A549 (cell line): ENCODE measurements at regions of chr1 and their contacts with region 1.

Region 1: GRCh38 chr1:28581536-28582247 is 10.4 kb upstream of the RAB42 start:
- DNase-seq: peak; percentile 88 to 94
- ATAC-seq: peak; percentile 90 to 93
- H3K4me3 ChIP-seq: peak overlapping the region; percentile 99
- H3K27ac ChIP-seq: peak overlapping the region; percentile 96 to 98
- H3K4me1 ChIP-seq: peaks cover 21% of the 10 kb centered on the region; the same call in 2 of the 3 replicates
- CTCF ChIP-seq: no peak
- EP300 ChIP-seq: no peak
- POLR2A ChIP-seq: peak; percentile 99
- RAD21 ChIP-seq: no peak

Region 2: GRCh38 chr1:28369371-28370238 is 212.1 kb before region 1 on chr1 and contains the start of gene PHACTR4:
- CTCF ChIA-PET with region 1: no interaction called
- POLR2A ChIA-PET with region 1: interaction called, 10 read pairs
- DNase-seq: peak; percentile 87 to 95
- ATAC-seq: peak; percentile 94 to 98
- H3K4me3 ChIP-seq: peak within 1 kb of the TSS; percentile 72
- H3K27ac ChIP-seq: peak within 1 kb of the TSS; percentile 96
- H3K4me1 ChIP-seq: peaks cover 39% of the 10 kb centered on the region
- CTCF ChIP-seq: no peak
- EP300 ChIP-seq: no peak
- POLR2A ChIP-seq: peak; percentile 74
- RAD21 ChIP-seq: no peak
- polyA plus RNA-seq, gene PHACTR4: 17.4 and 32.1 TPM in 2 replicates

Region 3: GRCh38 chr1:28518000-28518744 is 63.5 kb before region 1 on chr1:
- CTCF ChIA-PET with region 1: interaction called, 4 read pairs
- POLR2A ChIA-PET with region 1: interaction called, 19 read pairs
- DNase-seq: peak; percentile 73 to 86
- ATAC-seq: peak; percentile 56 to 61
- H3K4me3 ChIP-seq: peak overlapping the region; percentile 79
- H3K27ac ChIP-seq: peak overlapping the region; percentile 95 to 97
- H3K4me1 ChIP-seq: peaks cover 40% of the 10 kb centered on the region
- CTCF ChIP-seq: peak; percentile 76
- EP300 ChIP-seq: no peak
- POLR2A ChIP-seq: peak; percentile 62
- RAD21 ChIP-seq: peak; percentile 63 to 74

Region 4: DNA sequence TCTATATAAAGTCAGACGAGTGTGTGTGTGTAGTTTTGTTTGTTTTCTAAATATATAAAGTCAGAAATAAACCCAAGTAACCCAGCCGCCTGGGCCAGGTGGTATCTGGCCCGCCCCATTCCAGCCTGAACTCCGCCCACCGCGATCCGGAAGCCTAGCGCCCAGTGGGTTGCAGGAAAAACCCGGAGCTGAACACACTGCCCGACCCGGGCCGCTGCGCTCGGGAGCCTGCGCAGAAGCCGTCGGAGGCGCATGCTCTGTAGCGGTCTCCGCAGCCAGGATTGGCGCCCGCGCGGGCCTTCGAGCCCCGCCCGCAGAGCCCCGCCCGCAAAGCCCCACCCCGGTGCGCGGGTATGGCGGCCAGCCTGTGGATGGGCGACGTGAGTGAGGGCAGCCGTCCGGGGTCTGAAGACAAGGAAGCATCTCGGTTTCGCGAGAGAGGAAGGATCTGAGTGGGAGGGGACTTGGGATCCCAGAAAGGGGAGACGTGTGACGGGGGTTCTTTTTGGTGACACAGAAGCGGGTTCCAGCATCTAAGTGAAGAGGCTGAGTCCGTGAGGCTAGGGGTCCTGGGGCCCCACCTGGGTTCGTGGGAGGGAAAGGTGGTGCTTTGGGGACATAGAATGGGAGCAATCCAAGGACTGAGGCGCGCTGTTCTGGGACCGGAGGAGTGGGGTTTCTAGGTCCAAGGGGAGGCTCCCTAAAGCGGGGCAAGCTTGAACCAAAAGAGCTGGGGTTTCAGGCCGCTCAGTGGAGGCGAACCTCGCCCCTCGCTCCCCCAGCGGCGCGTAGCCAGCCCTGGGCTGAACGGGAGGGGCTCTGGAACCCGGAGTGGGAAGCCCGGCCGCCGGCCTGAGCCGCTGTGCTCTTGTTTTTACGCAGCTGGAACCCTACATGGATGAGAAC is 28.7 kb before region 1 on chr1 and contains the start of gene TRNAU1AP:
- CTCF ChIA-PET with region 1: interaction called, 6 read pairs
- POLR2A ChIA-PET with region 1: interaction called, 34 read pairs
- DNase-seq: peak; percentile 67 to 92
- ATAC-seq: peak; percentile 95 to 97
- H3K4me3 ChIP-seq: peak within 1 kb of the TSS; percentile 82
- H3K27ac ChIP-seq: peak within 1 kb of the TSS; percentile 90 to 91
- H3K4me1 ChIP-seq: 0 out of 3 replicates have a peak, but pooled peaks cover 6% of the 10 kb centered on the region
- CTCF ChIP-seq: no peak
- EP300 ChIP-seq: no peak
- POLR2A ChIP-seq: peak; percentile 59
- RAD21 ChIP-seq: no peak
- polyA plus RNA-seq, gene TRNAU1AP: 23.8 and 25.5 TPM in 2 replicates

Region 5: DNA sequence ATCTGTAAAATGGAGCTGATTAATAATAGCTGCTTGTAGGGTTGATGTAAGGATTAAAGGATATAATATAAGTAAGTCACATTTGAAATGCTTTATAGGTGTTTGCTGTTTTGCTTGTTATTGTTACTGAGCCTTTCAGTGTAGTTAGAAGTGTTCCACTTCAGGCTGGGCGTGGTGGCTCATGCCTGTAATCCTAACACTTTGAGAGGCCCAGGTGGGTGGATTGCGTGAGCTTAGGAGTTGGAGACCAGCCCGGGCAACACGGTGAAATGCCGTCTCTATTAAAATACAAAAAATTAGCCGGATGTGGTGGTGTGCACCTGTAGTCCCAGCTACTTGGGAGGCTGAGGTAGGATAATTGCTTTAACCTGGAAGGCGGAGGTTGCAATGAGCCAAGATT is 16.7 kb before region 1 on chr1:
- CTCF ChIA-PET with region 1: no interaction called
- POLR2A ChIA-PET with region 1: interaction called, 12 read pairs
- DNase-seq: no peak
- ATAC-seq: no peak
- H3K4me3 ChIP-seq: no peak overlapping the region
- H3K27ac ChIP-seq: no peak overlapping the region
- H3K4me1 ChIP-seq: no peaks in the 10 kb centered on the region
- CTCF ChIP-seq: no peak
- EP300 ChIP-seq: no peak
- POLR2A ChIP-seq: no peak
- RAD21 ChIP-seq: no peak

Region 6: DNA sequence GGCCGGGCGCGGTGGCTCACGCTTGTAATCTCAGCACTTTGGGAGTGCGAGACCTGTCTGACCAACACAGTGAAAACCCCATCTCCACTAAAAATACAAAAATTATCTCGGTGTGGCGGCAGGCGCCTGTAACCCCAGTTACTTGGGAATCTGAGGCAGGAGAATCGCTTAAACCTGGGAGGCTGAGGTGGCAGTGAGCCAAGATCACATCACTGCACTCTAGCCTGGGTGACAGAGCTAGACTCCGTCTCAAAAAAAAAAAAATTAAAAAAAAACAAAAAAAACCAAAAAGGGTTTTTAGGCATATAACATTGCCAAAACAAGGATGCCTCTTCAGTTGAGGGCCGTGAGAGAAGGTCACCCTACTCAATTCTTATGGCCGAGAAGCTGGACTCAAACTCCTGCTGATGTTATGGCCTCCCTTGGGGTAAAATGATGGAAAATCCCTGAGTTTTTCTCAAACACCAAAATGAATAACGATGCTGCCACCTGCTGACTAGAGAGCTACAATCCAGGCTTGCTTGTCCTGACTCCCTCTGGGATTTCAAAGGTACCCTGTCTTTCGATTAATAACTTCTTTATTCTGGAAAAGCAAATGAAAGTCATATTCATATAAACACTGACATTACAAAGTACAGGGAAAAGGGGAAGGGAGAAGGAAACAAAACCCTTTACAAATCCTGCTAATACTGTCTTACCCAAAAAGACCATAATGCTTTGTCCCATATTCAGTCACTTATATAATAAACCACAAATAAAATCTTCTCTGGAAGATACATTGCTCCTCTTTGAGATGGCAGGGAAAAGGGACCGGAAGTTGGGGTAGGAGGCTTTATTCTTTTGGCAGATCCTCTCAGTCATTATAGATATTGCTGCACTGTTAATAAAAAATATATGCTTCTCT is 21.1 kb after region 1 on chr1:
- CTCF ChIA-PET with region 1: interaction called, 25 read pairs
- POLR2A ChIA-PET with region 1: interaction called, 28 read pairs
- DNase-seq: peak; percentile 61 to 70
- ATAC-seq: peak; percentile 85 to 88
- H3K4me3 ChIP-seq: no peak overlapping the region
- H3K27ac ChIP-seq: peak overlapping the region; percentile 9 to 78; a peak in 4 of 6 replicates
- H3K4me1 ChIP-seq: peaks cover 16% of the 10 kb centered on the region
- CTCF ChIP-seq: peak; percentile 76
- EP300 ChIP-seq: no peak
- POLR2A ChIP-seq: no peak
- RAD21 ChIP-seq: peak; percentile 81 to 82

Region 7: DNA sequence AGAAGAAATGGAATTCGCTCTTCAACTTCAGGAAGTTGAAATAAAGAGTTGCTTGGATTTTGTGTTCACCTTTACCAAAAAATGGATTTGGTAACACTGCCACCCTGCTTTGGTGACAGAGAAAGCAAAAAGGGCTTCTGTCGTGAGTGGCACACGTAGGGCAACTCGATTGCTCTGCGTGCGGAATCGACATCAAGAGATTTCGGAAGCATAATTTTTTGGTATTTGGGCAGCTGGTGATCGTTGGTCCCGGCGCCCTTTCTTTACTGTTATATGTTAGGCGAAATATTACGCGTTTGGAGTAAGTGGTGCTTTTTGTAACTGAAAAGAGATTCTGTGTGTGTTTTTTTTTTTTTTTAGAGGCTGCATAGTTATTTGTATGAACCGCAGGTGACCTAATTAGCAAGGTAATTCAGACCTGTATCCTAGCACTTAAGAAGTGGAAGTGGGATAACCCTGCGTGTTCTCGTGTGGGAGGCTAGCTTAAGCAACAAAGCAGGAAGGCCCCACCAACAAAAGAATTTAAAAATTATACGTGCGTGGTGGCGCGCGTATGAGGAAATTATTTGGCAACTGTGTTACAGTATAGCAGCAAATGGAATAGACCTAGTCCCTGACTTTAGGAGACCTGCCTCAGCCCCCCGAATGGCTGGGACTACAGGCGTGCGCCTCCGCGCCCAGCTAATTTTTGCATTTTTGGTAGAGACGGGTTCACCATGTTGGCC is 66.9 kb after region 1 on chr1 and contains the start of gene RNU11:
- CTCF ChIA-PET with region 1: no interaction called
- POLR2A ChIA-PET with region 1: interaction called, 12 read pairs
- DNase-seq: peak; percentile 77 to 97
- ATAC-seq: peak; percentile 88 to 93
- H3K4me3 ChIP-seq: peak within 1 kb of the TSS; percentile 40
- H3K27ac ChIP-seq: peak within 1 kb of the TSS; percentile 96 to 97
- H3K4me1 ChIP-seq: peaks cover 15% of the 10 kb centered on the region; the same call in 2 of the 3 replicates
- CTCF ChIP-seq: no peak
- EP300 ChIP-seq: 0 out of 5 replicates have a peak, but pooled peaks of 1 of the 2 experiments have one; percentile 29
- POLR2A ChIP-seq: peak; percentile 99
- RAD21 ChIP-seq: no peak
- polyA plus RNA-seq, gene RNU11: not detected in 2 replicates